ENCODE measurements at regions of chr5 and their contacts with region 1.

Region 1: GRCh38 chr5:160021831-160022446 is 13.0 kb downstream of the TTC1 start:
- DNase-seq: peak; percentile 81
- ATAC-seq: peak; percentile 81
- H3K4me3 ChIP-seq: no peak overlapping the region
- H3K27ac ChIP-seq: no peak overlapping the region
- H3K4me1 ChIP-seq: no peaks in the 10 kb centered on the region
- H3K27me3 ChIP-seq: no peaks in the 10 kb centered on the region
- CTCF ChIP-seq: peak; percentile 85

Region 2: DNA sequence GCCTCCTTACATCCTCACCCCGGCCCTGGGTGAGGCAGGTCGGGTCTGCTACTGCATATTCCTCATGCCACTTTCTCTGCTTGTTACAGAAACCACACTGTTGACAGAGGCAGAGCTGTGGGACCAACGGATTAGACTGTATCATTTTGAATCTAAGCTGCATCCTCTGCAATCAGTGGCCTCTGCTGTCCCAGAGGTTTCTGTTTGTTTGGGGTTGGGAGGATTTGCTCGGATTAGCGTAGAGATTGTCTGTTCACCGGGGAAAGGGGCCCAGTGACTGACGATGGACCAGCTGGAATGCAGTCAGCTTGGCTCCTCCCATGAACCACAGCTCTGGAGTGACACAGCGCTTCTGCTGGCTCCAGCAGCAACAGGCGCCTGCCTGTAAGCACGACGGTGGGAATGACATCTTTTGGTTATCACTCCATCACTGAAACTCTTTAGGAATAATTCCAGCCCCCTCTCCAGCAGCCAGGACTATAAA is 142.9 kb before region 1 on chr5:
- CTCF ChIA-PET with region 1: no interaction called
- POLR2A ChIA-PET with region 1: no interaction called
- intact Hi-C with region 1: no loop called
- DNase-seq: no peak
- ATAC-seq: no peak
- H3K4me3 ChIP-seq: no peak overlapping the region
- H3K27ac ChIP-seq: no peak overlapping the region
- H3K4me1 ChIP-seq: peaks cover 7% of the 10 kb centered on the region
- H3K27me3 ChIP-seq: no peaks in the 10 kb centered on the region
- CTCF ChIP-seq: no peak

Region 3: GRCh38 chr5:160082614-160083500 is 60.9 kb after region 1 on chr5:
- CTCF ChIA-PET with region 1: interaction called, 3 read pairs
- POLR2A ChIA-PET with region 1: no interaction called
- intact Hi-C with region 1: loop called (anchors 5 kb)
- DNase-seq: peak; percentile 77
- ATAC-seq: peak; percentile 75
- H3K4me3 ChIP-seq: 0 out of 2 replicates have a peak overlapping the region, but pooled peaks have one; percentile 18
- H3K27ac ChIP-seq: peak overlapping the region; percentile 6; the same call in 1 of the 2 replicates
- H3K4me1 ChIP-seq: peaks cover 25% of the 10 kb centered on the region
- H3K27me3 ChIP-seq: no peaks in the 10 kb centered on the region
- CTCF ChIP-seq: no peak

Region 4: GRCh38 chr5:160158087-160158486 is 136.1 kb after region 1 on chr5:
- CTCF ChIA-PET with region 1: no interaction called
- POLR2A ChIA-PET with region 1: no interaction called
- intact Hi-C with region 1: loop called (anchors 1 kb)
- DNase-seq: peak; percentile 12
- ATAC-seq: peak; percentile 80
- H3K4me3 ChIP-seq: no peak overlapping the region
- H3K27ac ChIP-seq: no peak overlapping the region
- H3K4me1 ChIP-seq: peaks cover 7% of the 10 kb centered on the region
- H3K27me3 ChIP-seq: no peaks in the 10 kb centered on the region
- CTCF ChIP-seq: peak; percentile 27; the same call in 1 of the 2 replicates

Region 5: GRCh38 chr5:160175438-160176218 is 153.7 kb after region 1 on chr5:
- CTCF ChIA-PET with region 1: no interaction called
- POLR2A ChIA-PET with region 1: no interaction called
- intact Hi-C with region 1: no loop called
- DNase-seq: no peak
- ATAC-seq: no peak
- H3K4me3 ChIP-seq: no peak overlapping the region
- H3K27ac ChIP-seq: no peak overlapping the region
- H3K4me1 ChIP-seq: no peaks in the 10 kb centered on the region
- H3K27me3 ChIP-seq: no peaks in the 10 kb centered on the region
- CTCF ChIP-seq: no peak

Region 6: DNA sequence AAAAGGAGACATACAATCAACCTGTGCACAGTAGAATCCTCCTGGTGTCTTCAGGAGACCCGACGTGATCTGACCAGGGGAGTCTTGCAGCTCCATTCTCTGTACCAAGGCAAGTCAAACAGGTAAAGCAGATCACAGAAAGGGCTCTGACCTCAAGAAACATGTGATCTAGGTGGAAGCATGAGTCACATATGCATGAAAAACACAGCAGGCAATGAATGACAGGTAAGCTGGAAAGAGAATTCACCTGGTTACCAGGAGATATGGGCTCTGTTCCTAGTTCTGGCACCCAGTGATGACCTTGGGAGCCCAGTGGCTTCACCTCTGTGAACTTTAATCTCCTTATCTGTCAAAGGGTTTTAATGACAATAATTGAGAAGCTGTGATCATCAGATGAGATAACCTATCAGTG is 188.0 kb after region 1 on chr5:
- CTCF ChIA-PET with region 1: no interaction called
- POLR2A ChIA-PET with region 1: no interaction called
- intact Hi-C with region 1: no loop called
- DNase-seq: peak; percentile 77
- ATAC-seq: peak; percentile 81
- H3K4me3 ChIP-seq: no peak overlapping the region
- H3K27ac ChIP-seq: no peak overlapping the region
- H3K4me1 ChIP-seq: peaks cover 11% of the 10 kb centered on the region
- H3K27me3 ChIP-seq: no peaks in the 10 kb centered on the region
- CTCF ChIP-seq: no peak

Region 7: DNA sequence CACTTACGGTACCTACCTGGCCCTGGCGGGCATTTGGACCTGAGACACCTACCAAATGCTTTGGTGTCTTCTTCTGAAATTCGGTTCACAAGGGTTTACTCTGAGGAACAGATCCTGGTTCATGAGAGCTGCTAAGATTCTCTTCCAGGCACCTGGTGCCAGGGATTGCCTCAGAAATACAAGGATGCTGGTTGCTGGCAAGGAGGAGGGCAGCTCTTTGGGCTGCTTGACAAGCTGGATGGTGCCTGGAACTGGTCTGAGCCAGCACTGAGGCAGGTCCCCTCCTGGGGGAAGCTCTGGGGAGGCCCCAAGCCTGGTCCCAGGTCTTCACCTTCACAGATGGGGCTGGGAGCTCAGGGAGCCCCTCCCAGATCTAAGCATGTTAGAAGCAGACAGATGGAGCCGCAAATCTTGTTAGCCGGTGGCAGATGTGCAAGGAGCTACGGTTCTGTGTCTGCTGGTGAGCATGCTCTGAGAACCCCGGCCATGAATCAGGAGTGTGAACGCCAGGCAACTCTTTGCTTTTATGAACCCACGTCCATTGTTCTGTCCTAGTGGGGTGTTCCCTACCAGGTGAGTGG is 223.7 kb after region 1 on chr5:
- CTCF ChIA-PET with region 1: interaction called, 3 read pairs
- POLR2A ChIA-PET with region 1: no interaction called
- intact Hi-C with region 1: loop called (anchors 5 kb)
- DNase-seq: no peak
- ATAC-seq: no peak
- H3K4me3 ChIP-seq: no peak overlapping the region
- H3K27ac ChIP-seq: no peak overlapping the region
- H3K4me1 ChIP-seq: no peaks in the 10 kb centered on the region
- H3K27me3 ChIP-seq: no peaks in the 10 kb centered on the region
- CTCF ChIP-seq: no peak

Region 8: DNA sequence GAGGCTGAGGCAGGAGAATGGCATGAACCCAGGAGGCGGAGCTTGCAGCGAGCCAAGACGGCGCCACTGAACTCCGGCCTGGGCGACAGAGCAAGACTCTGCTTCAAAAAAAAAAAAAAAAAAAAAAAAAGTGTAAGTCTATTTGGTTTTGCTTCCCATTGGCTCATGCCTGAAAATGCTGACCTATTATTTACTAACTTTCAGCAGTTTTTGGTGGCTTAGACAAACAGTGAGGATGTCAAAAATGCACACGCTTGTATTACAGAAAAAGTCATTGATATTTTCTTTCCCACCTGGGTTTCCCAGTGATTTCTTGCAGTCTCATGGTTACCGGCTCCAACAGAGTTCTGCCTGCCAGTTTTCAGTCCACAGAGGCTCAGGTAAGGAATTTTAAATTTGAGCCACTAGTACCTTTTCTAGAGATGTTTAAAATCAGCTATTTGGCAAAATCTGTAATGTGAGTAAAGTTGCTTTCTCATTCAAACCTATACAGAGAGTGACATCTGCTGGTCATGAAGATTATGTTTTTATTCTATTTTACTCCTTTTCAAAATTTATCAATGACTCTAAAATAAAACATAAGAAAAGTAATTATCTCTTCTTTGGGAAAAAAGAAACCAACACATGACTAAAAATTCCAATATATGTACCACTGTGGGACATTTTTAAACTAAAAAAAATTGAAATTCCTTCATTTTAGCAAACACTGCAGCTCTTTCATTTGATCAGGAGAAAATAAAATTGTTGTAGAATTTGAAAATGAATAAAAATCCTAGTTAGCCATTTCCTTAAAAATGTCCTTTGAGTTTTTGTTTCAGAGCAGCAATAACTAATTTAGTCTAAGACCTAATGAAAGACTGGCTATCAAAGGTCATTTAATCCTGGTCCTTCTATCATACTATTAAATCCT is 369.1 kb after region 1 on chr5:
- CTCF ChIA-PET with region 1: interaction called, 5 read pairs
- POLR2A ChIA-PET with region 1: no interaction called
- intact Hi-C with region 1: loop called (anchors 1 kb)
- DNase-seq: peak; percentile 53
- ATAC-seq: peak; percentile 50; the same call in 1 of the 2 replicates
- H3K4me3 ChIP-seq: no peak overlapping the region
- H3K27ac ChIP-seq: no peak overlapping the region
- H3K4me1 ChIP-seq: no peaks in the 10 kb centered on the region
- H3K27me3 ChIP-seq: no peaks in the 10 kb centered on the region
- CTCF ChIP-seq: peak; percentile 78

Measured in PC-3 (cell line).